ENCODE measurements at regions of chr21 and their contacts with region 1.

Region 1: DNA sequence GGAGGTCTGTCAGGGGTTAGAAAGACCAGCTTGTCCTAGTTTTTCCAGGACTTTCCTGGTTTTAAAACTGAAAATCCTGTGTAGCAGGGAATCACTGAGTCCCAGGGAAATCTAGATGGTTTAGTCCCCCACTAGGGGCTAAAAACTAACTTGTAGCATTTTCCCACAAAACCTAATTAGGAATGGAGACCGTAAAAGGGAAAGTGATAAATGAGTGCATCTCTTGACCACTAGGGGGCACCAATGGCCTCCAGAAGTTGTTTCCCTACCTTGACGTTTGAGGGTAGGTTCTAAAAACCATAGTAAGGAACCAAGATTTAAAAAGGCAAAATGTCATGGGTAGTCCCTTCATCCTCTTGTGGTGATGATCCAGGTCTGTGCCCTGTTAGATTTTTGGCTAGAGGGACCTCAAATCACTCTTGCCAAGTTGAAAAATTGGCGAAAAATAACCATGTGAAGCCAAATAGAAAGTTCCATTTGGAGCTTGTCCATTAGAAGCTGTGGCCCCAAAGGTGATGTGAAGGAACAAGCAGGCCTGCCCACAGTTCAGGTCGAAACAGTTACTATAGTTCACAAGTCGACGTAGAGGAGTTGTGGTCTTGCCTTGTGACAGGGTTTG is 24.5 kb downstream of the CLIC6 start:
- DNase-seq: peak; percentile 78
- H3K4me3 Mint-ChIP-seq: no peak overlapping the region
- H3K27ac Mint-ChIP-seq: no peak overlapping the region
- H3K4me1 Mint-ChIP-seq: no peaks in the 10 kb centered on the region
- H3K27me3 Mint-ChIP-seq: no peaks in the 10 kb centered on the region
- CTCF ChIP-seq: peak; percentile 77

Region 2: DNA sequence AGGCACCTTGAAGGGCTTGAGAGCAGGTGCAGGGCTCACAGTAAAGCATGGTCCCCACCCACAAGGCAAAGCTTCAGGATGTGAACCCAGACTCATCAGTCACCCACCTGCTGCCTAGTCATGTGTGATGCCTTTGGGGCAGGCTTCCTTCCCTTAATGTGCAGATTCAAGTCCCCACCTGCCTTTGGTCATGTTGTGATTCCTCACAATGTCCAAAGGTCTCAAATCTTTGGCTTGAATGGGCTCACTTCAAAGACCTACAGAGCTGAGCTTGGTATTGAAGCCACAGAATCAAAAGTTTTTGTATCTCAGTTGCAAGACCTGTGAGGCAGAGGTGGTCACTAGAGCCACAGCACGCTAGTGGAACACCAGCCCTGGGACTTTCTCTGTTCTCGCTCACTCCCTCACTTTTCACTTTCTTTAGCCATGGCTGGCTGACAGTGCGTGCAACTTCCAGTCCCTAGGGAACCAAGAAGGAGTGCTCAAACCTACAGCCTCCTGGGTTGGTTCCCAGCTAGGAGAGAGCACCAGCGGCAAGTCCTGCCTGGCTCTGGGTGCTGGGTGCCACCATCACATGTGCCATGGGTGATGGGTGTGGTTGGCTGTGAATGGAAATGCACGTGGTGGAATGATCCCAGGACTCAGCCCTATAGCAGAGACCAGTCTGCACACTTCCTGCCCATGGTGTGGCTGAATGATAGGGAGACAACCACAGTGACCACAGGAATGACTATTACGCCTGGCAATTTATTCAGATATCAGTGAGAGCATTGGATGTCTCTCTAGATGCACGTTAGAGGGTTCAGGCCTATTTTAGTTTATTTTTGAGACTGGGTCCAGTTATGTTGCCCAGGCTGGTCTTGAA is 50.9 kb before region 1 on chr21:
- CTCF ChIA-PET with region 1: no interaction called
- POLR2A ChIA-PET with region 1: no interaction called
- intact Hi-C with region 1: no loop called
- DNase-seq: no peak
- H3K4me3 Mint-ChIP-seq: no peak overlapping the region
- H3K27ac Mint-ChIP-seq: no peak overlapping the region
- H3K4me1 Mint-ChIP-seq: peaks cover 9% of the 10 kb centered on the region
- H3K27me3 Mint-ChIP-seq: peaks cover 6% of the 10 kb centered on the region
- CTCF ChIP-seq: no peak

Region 3: GRCh38 chr21:34653522-34653921 is 39.8 kb before region 1 on chr21:
- CTCF ChIA-PET with region 1: no interaction called
- POLR2A ChIA-PET with region 1: no interaction called
- intact Hi-C with region 1: no loop called
- DNase-seq: no peak
- H3K4me3 Mint-ChIP-seq: no peak overlapping the region
- H3K27ac Mint-ChIP-seq: no peak overlapping the region
- H3K4me1 Mint-ChIP-seq: no peaks in the 10 kb centered on the region
- H3K27me3 Mint-ChIP-seq: peaks cover 90% of the 10 kb centered on the region
- CTCF ChIP-seq: no peak

Region 4: DNA sequence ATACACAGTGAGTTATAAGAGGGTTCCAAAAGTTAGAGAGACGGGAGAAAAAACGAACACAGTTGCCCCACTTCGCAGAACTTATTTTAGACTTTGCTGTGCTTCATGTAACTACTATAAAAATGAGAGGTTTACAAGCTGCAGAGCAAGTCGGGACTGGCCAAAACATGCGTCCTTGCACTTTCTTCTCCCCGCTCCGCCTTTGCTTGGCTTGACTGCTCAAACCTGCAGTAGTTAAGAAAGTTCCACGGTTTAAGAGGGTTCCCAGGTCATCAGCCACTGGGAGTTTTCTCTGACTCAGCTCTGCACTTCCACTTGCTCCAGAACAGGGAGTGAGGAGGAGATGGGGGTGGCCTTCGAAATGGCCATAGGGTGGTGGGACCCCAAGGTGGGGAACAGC is 11.7 kb after region 1 on chr21:
- CTCF ChIA-PET with region 1: interaction called, 12 read pairs
- POLR2A ChIA-PET with region 1: interaction called, 4 read pairs
- intact Hi-C with region 1: no loop called
- DNase-seq: no peak
- H3K4me3 Mint-ChIP-seq: no peak overlapping the region
- H3K27ac Mint-ChIP-seq: no peak overlapping the region
- H3K4me1 Mint-ChIP-seq: peaks cover 22% of the 10 kb centered on the region
- H3K27me3 Mint-ChIP-seq: no peaks in the 10 kb centered on the region
- CTCF ChIP-seq: no peak

Region 5: DNA sequence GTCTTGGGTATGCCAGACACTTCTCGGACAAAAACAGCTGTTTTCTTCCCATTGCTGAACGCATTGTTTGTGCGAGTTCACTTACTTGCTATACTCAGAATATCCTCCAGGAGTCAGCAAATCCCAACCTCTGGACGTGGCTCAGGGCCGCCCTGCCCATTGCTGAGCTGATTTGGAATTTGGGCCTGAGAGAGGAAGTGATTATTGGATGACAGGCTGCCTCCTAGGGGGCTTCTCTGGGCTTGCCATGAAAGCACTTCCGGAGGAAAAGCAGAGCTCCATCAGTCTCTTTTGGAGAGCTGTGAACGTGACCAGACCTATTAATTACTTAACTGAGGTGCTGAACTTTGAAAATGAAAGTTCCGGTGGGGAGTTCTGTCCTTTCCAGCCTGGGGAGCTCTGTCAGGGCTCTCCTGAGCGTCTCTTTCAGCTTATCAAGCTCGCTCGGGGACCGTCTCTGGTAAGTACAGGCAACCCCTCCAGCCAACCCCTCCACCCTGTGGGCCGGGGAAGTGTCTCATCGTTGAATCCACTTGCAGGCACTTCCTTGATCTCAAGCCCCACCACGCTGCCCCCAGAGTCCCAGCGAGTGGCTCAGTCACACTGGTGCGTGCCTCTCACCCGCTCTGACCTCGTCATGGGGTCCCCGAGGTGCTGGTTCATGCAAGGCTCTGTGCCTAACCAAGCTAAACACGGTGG is 52.4 kb after region 1 on chr21:
- CTCF ChIA-PET with region 1: interaction called, 56 read pairs
- POLR2A ChIA-PET with region 1: interaction called, 5 read pairs
- intact Hi-C with region 1: loop called (anchors 1 kb)
- DNase-seq: peak; percentile 83
- H3K4me3 Mint-ChIP-seq: no peak overlapping the region
- H3K27ac Mint-ChIP-seq: no peak overlapping the region
- H3K4me1 Mint-ChIP-seq: peaks cover 26% of the 10 kb centered on the region
- H3K27me3 Mint-ChIP-seq: no peaks in the 10 kb centered on the region
- CTCF ChIP-seq: peak; percentile 95

Region 6: GRCh38 chr21:34865928-34866284 is 172.6 kb after region 1 on chr21:
- CTCF ChIA-PET with region 1: interaction called, 3 read pairs
- POLR2A ChIA-PET with region 1: no interaction called
- intact Hi-C with region 1: loop called (anchors 5 kb)
- DNase-seq: peak; percentile 71
- H3K4me3 Mint-ChIP-seq: peak overlapping the region; percentile 48
- H3K27ac Mint-ChIP-seq: peak overlapping the region; percentile 94
- H3K4me1 Mint-ChIP-seq: peaks cover 74% of the 10 kb centered on the region
- H3K27me3 Mint-ChIP-seq: no peaks in the 10 kb centered on the region
- CTCF ChIP-seq: no peak

Region 7: GRCh38 chr21:35616090-35616489 is 922.8 kb after region 1 on chr21:
- CTCF ChIA-PET with region 1: interaction called, 3 read pairs
- POLR2A ChIA-PET with region 1: no interaction called
- intact Hi-C with region 1: loop called (anchors 1 kb)
- DNase-seq: peak; percentile 44
- H3K4me3 Mint-ChIP-seq: no peak overlapping the region
- H3K27ac Mint-ChIP-seq: no peak overlapping the region
- H3K4me1 Mint-ChIP-seq: peaks cover 27% of the 10 kb centered on the region
- H3K27me3 Mint-ChIP-seq: no peaks in the 10 kb centered on the region
- CTCF ChIP-seq: peak; percentile 47

Region 8: GRCh38 chr21:36028127-36029069 is 1335.1 kb after region 1 on chr21:
- CTCF ChIA-PET with region 1: interaction called, 3 read pairs
- POLR2A ChIA-PET with region 1: no interaction called
- intact Hi-C with region 1: loop called (anchors 1 kb)
- DNase-seq: peak; percentile 70
- H3K4me3 Mint-ChIP-seq: no peak overlapping the region
- H3K27ac Mint-ChIP-seq: no peak overlapping the region
- H3K4me1 Mint-ChIP-seq: peaks cover 7% of the 10 kb centered on the region
- H3K27me3 Mint-ChIP-seq: no peaks in the 10 kb centered on the region
- CTCF ChIP-seq: peak; percentile 93